ENCODE measurements at regions of chr7 and their contacts with region 1.

Region 1: DNA sequence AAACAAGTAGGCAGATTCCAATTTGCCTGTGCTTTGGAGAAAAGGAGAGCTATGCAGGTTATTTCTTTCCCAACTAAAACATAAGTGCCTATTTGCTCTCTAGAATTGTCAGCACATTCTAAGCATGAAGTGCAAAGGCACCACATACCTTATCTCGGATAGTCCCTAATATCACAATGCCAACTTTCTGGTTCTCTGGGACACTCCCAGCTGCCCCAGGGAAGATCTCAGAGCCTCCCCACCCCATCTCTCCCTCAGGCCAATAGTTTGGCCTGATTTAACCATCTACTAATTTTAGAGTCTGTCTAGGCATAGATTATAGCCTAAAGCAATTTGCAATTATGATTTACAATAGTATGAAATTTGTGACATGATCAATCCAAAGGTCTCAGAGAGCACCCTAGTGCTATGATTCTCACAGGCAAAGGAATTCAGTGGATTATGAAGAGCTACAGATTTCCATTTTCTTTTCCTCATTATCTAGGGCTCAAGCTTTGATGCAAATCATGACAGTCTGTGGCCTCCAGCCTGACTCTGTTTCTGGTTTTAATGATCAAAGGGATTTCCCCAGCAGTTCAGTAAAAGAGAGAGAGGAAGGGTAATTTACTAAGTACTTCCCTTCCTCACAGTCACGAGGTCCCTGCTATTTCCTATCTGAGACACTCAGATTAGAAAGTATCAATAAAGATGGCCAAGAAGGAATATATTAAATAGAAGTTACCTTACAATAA is 29.0 kb upstream of the IL6 start:
- DNase-seq: no peak
- H3K4me3 Mint-ChIP-seq: no peak overlapping the region
- H3K27ac Mint-ChIP-seq: peak overlapping the region; percentile 56
- H3K4me1 Mint-ChIP-seq: peaks cover 78% of the 10 kb centered on the region
- H3K27me3 Mint-ChIP-seq: peaks cover 7% of the 10 kb centered on the region

Region 2: GRCh38 chr7:22601812-22602565 is 96.1 kb before region 1 on chr7:
- intact Hi-C with region 1: no loop called
- DNase-seq: no peak
- H3K4me3 Mint-ChIP-seq: no peak overlapping the region
- H3K27ac Mint-ChIP-seq: no peak overlapping the region
- H3K4me1 Mint-ChIP-seq: no peaks in the 10 kb centered on the region
- H3K27me3 Mint-ChIP-seq: peaks cover 49% of the 10 kb centered on the region

Region 3: DNA sequence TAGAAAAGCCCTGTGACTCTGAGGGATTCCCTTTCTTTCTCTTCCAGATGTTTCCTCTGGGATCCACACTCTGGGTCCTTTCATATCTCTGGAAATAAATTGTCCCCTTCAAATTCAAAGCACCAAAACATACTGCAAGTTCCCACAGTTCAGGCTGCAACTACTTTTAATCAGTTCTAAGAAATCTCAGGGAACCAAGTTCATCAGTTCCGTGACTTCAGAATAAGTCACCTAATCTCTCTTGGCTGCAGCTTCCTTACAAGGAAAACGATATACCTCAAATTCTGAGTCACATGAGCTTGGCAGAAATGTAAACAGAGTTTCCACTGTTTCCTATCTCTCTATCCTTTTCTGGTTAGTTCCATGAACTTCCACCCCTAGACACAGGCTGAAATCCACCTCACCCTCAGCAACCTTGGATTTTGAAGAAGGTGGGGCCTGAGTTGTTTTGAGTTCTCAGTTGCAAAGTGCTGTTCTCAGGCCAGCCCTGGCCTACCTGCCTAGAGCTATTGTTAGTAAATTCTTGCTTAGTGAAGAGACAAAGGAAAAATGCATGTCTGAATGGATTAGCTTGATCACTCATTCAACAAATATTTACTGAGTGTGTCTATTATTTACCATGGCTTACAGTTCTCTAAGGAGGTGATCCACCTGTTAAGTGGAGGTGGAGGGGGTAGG is 30.3 kb before region 1 on chr7:
- intact Hi-C with region 1: loop called (anchors 1 kb)
- DNase-seq: no peak
- H3K4me3 Mint-ChIP-seq: no peak overlapping the region
- H3K27ac Mint-ChIP-seq: peak overlapping the region; percentile 59
- H3K4me1 Mint-ChIP-seq: peaks cover 68% of the 10 kb centered on the region
- H3K27me3 Mint-ChIP-seq: peaks cover 9% of the 10 kb centered on the region

Region 4: GRCh38 chr7:22675917-22676343 is 22.1 kb before region 1 on chr7:
- intact Hi-C with region 1: loop called (anchors 1 kb)
- DNase-seq: peak; percentile 63
- H3K4me3 Mint-ChIP-seq: no peak overlapping the region
- H3K27ac Mint-ChIP-seq: peak overlapping the region; percentile 54
- H3K4me1 Mint-ChIP-seq: peaks cover 84% of the 10 kb centered on the region
- H3K27me3 Mint-ChIP-seq: peaks cover 2% of the 10 kb centered on the region